ENCODE measurements at regions of chr17 and their contacts with region 1.

Region 1: GRCh38 chr17:72421128-72422092 is 300.6 kb downstream of the SOX9 start:
- DNase-seq: peak; percentile 81
- CTCF ChIP-seq: no peak

Region 2: DNA sequence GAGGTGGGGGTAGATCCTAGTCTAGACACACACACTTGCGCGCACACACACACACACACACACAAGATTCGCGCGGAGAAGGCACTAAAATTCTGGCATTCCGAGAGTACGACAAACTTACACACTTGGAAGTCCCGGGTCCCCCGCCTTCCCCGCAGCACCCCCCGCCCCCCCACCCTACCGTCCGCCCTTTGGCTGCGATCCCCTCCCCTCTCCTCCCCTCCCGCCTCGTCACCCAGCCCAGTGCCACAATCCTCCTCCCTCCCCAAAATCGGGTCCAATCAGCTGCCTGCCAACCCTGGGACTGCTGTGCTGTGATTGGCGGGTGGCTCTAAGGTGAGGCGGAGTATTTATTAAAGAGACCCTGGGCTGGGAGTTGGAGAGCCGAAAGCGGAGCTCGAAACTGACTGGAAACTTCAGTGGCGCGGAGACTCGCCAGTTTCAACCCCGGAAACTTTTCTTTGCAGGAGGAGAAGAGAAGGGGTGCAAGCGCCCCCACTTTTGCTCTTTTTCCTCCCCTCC is 300.7 kb before region 1 on chr17 and contains the start of gene SOX9:
- CTCF ChIA-PET with region 1: interaction called, 7 read pairs
- POLR2A ChIA-PET with region 1: interaction called, 15 read pairs
- DNase-seq: peak; percentile 90
- CTCF ChIP-seq: no peak

Region 3: GRCh38 chr17:72306037-72306436 is 115.4 kb before region 1 on chr17:
- CTCF ChIA-PET with region 1: no interaction called
- POLR2A ChIA-PET with region 1: no interaction called
- DNase-seq: no peak
- CTCF ChIP-seq: no peak

Region 4: GRCh38 chr17:72397223-72397667 is 24.2 kb before region 1 on chr17:
- CTCF ChIA-PET with region 1: no interaction called
- POLR2A ChIA-PET with region 1: no interaction called
- DNase-seq: no peak
- CTCF ChIP-seq: no peak

Region 5: DNA sequence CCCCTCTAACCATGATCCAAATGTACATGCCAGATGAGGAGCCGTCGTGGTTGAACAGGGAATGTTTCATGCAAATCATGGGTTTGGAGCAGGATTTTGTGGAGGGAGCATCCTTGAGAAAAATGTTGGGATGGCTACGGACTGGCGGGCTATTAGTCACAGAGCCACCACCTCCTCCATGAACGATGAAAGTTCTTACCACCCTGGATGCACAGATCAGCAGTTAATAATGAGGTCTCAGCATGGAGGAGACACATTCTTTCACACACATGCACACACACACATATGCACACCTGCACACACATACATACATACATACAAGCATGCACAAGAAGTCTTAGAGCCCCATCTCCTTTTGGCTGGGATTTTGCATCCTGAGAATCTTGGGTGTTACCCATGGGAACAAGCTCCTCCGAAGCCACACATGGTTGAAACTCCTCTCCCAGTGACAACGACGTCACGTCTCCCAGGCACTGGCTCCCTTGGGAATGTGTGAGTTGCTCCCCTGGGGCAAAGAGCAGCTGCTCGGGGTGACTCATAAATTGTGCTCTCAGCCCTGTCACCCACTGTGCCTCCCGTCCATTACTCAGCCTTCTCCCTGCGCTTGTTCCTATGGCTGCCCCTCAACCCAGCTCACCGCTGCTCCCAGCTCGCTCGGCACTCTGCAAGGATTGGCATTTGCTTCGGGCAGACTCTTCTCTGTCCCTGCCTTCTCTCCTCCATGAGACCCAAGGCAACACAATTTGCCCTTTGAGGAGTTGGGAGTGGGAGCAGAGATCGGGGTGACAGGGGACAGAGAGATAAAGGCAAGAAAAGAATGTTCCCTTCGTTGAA is 44.0 kb after region 1 on chr17:
- CTCF ChIA-PET with region 1: interaction called, 52 read pairs
- POLR2A ChIA-PET with region 1: interaction called, 25 read pairs
- DNase-seq: peak; percentile 62
- CTCF ChIP-seq: no peak